ENCODE measurements at regions of chr2 and their contacts with region 1.

Region 1: DNA sequence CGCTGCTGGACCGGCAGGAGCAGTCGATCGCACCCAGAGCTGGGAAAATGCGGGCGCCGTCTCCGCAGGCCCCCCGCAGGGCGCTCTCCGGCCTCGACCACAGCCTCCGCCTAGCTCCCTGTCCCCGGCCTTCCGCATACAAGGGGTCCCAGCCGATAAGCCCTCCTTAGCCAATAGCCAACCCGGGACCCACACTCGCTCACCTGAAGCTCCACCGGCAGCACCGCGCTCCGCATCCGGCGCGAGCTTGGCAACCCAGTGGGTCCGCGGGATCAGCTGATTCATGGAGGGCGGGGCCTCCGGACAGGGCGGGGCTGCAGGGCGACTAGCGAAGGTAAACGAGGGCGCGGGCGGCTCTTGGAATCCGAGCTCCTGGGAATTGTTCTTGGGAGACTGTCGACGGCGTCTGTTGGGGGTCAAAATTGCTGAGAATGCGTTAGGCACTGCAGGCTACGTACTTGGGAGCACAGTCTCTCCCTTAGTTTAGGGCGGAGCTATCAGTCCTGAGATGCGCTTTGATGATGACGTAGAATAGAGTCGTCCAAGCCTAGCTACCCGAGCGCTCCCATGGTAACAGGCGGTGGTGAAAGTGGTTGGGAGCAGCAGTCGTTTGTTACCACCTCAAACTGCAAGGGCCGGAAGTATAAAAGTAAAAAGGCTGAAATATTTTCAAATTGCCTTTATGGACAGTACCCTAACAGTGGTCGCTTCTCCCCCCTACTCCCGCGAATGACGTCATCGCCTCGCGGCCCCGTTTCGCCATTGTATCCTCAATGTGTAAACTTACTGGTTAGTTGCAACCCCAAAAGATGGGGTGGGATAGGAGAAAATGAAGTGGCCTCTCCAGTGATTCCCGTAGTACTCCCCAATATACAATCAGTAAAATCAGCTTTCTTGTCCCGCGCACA is at the start of gene ALS2:
- DNase-seq: peak; percentile 94 to 97 (median 96)
- H3K4me3 ChIP-seq: peak within 1 kb of the TSS; percentile 89 to 95
- H3K4me3 Mint-ChIP-seq: peak within 1 kb of the TSS; percentile 93 to 99 (median 97)
- H3K27ac ChIP-seq: peak within 1 kb of the TSS; percentile 76
- H3K27ac Mint-ChIP-seq: peak within 1 kb of the TSS; percentile 85 to 100 (median 99)
- H3K4me1 ChIP-seq: peaks cover 15% of the 10 kb centered on the region
- H3K4me1 Mint-ChIP-seq: peaks cover 11 to 22% (median 15%) of the 10 kb centered on the region in 4 donors
- H3K27me3 ChIP-seq: no peaks in the 10 kb centered on the region
- H3K27me3 Mint-ChIP-seq: peaks cover 1 to 4% of the 10 kb centered on the region in 2 donors
- total RNA-seq, gene ALS2: 9.8 to 10.5 TPM

Region 2: DNA sequence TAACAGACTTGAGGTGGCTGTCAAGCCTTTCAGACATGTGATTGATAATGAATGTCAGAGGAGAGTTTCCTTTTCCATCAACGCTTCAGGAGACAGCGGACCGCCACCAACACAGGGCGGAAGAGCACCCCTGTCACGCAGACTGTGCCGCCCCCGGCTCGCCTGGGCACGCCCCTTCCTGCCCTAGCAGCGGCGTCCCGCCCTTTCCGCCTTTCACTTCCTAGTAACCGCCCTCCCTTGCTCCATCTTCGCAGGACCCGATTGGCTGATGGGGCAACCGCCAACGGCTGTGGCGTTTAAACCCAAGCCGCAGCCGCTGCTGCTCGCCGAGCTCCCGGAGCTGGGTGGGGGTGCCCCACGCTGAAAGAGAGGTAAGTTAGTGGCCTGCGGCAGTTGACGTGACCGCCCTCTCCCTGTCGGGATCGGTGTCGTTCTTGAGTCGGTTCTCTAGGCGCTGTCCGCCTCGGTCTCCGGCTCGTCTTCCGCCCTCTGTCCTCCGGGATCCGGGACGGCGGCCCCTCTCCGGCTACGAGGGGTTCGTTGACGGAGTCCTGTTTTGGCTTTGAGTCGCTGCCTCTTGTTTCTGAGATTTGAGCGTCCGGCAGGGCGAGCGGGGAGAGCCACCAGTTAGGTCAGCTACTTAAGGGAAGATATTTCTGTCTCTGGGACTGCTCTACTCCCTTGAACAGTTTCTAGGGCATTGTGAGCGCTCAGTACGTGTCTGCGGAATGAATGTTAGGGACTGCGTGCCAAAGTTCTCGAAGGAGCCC is 1254.9 kb before region 1 on chr2 and contains the start of gene SGO2:
- CTCF ChIA-PET with region 1: no interaction called
- POLR2A ChIA-PET with region 1: no interaction called
- intact Hi-C with region 1: loop called (anchors 5 kb)
- DNase-seq: peak; percentile 93 to 97 (median 95)
- H3K4me3 ChIP-seq: peak within 1 kb of the TSS; percentile 82 to 98
- H3K4me3 Mint-ChIP-seq: peak within 1 kb of the TSS; percentile 91 to 97 (median 93)
- H3K27ac ChIP-seq: peak within 1 kb of the TSS; percentile 55
- H3K27ac Mint-ChIP-seq: peak within 1 kb of the TSS; percentile 83 to 93 (median 85)
- H3K4me1 ChIP-seq: peaks cover 14% of the 10 kb centered on the region
- H3K4me1 Mint-ChIP-seq: peaks cover 6 to 15% (median 12%) of the 10 kb centered on the region in 4 donors
- H3K27me3 ChIP-seq: no peaks in the 10 kb centered on the region
- H3K27me3 Mint-ChIP-seq: no peaks in the 10 kb centered on the region
- total RNA-seq, gene SGO2: 4.4 to 4.8 TPM

Region 3: GRCh38 chr2:201451292-201452057 is 329.5 kb before region 1 on chr2 and contains the starts of genes STRADB and TRAK2:
- CTCF ChIA-PET with region 1: interaction called, 3 read pairs
- POLR2A ChIA-PET with region 1: interaction called, 17 read pairs
- intact Hi-C with region 1: loop called (anchors 1 kb)
- DNase-seq: peak; percentile 93 to 98 (median 95)
- H3K4me3 ChIP-seq: peak within 1 kb of the TSS; percentile 38 to 93
- H3K4me3 Mint-ChIP-seq: peak within 1 kb of the TSS; percentile 94 to 99 (median 98)
- H3K27ac ChIP-seq: peak within 1 kb of the TSS; percentile 74
- H3K27ac Mint-ChIP-seq: peak within 1 kb of the TSS; percentile 95 to 98 (median 97)
- H3K4me1 ChIP-seq: peaks cover 49% of the 10 kb centered on the region
- H3K4me1 Mint-ChIP-seq: peaks cover 29 to 52% (median 41%) of the 10 kb centered on the region in 4 donors
- H3K27me3 ChIP-seq: no peaks in the 10 kb centered on the region
- H3K27me3 Mint-ChIP-seq: no peaks in the 10 kb centered on the region
- total RNA-seq, gene STRADB: 17.3 to 20.9 TPM
- total RNA-seq, gene TRAK2: 46.8 to 47.3 TPM

Region 4: GRCh38 chr2:201642579-201643215 is 138.2 kb before region 1 on chr2:
- CTCF ChIA-PET with region 1: no interaction called
- POLR2A ChIA-PET with region 1: interaction called, 16 read pairs
- intact Hi-C with region 1: loop called (anchors 1 kb)
- DNase-seq: peak; percentile 83 to 91 (median 89)
- H3K4me3 ChIP-seq: peak overlapping the region; percentile 92 to 97
- H3K4me3 Mint-ChIP-seq: peak overlapping the region; percentile 89 to 99 (median 96)
- H3K27ac ChIP-seq: peak overlapping the region; percentile 83
- H3K27ac Mint-ChIP-seq: peak overlapping the region; percentile 95 to 100 (median 96)
- H3K4me1 ChIP-seq: no peaks in the 10 kb centered on the region
- H3K4me1 Mint-ChIP-seq: peaks cover 7 to 23% (median 7%) of the 10 kb centered on the region in 4 donors
- H3K27me3 ChIP-seq: no peaks in the 10 kb centered on the region
- H3K27me3 Mint-ChIP-seq: no peaks in the 10 kb centered on the region

Region 5: DNA sequence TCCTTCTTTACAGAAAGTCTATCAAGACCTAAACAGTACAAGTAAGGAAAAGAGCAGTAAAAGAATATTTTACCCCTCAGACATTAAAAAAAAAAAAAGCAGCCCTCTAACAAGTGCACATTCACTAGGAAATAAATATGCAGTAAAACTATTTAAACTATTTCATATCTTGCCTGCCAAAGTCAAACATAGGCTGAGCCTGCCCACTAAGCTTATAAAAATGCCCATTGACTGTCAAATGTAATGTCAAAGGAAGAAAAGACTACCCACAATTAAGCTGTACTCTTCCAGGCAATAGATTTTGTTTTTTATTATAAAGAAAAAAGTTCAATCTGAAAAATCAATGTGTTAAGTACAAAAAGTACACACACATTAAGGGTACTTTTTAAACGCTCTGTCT is 12.0 kb before region 1 on chr2:
- CTCF ChIA-PET with region 1: no interaction called
- POLR2A ChIA-PET with region 1: interaction called, 12 read pairs
- intact Hi-C with region 1: no loop called
- DNase-seq: no peak
- H3K4me3 ChIP-seq: no peak overlapping the region
- H3K4me3 Mint-ChIP-seq: no peak overlapping the region
- H3K27ac ChIP-seq: no peak overlapping the region
- H3K27ac Mint-ChIP-seq: peak overlapping the region in 1 of 7 donors; percentile 47
- H3K4me1 ChIP-seq: no peaks in the 10 kb centered on the region
- H3K4me1 Mint-ChIP-seq: peaks cover 0 to under 1% (median 0%) of the 10 kb centered on the region in 4 donors
- H3K27me3 ChIP-seq: no peaks in the 10 kb centered on the region
- H3K27me3 Mint-ChIP-seq: no peaks in the 10 kb centered on the region

Region 6: GRCh38 chr2:202238234-202239197 is 457.6 kb after region 1 on chr2 and contains the start of gene SUMO1:
- CTCF ChIA-PET with region 1: no interaction called
- POLR2A ChIA-PET with region 1: no interaction called
- intact Hi-C with region 1: loop called (anchors 5 kb)
- DNase-seq: peak; percentile 90 to 96 (median 90)
- H3K4me3 ChIP-seq: peak within 1 kb of the TSS; percentile 52 to 96
- H3K4me3 Mint-ChIP-seq: peak within 1 kb of the TSS; percentile 95 to 100 (median 98)
- H3K27ac ChIP-seq: peak within 1 kb of the TSS; percentile 81
- H3K27ac Mint-ChIP-seq: peak within 1 kb of the TSS; percentile 89 to 100 (median 98)
- H3K4me1 ChIP-seq: peaks cover 17% of the 10 kb centered on the region
- H3K4me1 Mint-ChIP-seq: peaks cover 16 to 48% (median 34%) of the 10 kb centered on the region in 4 donors
- H3K27me3 ChIP-seq: no peaks in the 10 kb centered on the region
- H3K27me3 Mint-ChIP-seq: no peaks in the 10 kb centered on the region
- total RNA-seq, gene SUMO1: 53.2 to 53.5 TPM

Region 7: GRCh38 chr2:202375609-202376408 is 594.9 kb after region 1 on chr2 and contains the start of gene BMPR2:
- CTCF ChIA-PET with region 1: no interaction called
- POLR2A ChIA-PET with region 1: no interaction called
- intact Hi-C with region 1: loop called (anchors 5 kb)
- DNase-seq: peak; percentile 73 to 88 (median 81)
- H3K4me3 ChIP-seq: peak within 1 kb of the TSS; percentile 91 to 98
- H3K4me3 Mint-ChIP-seq: peak within 1 kb of the TSS; percentile 96 to 99 (median 99)
- H3K27ac ChIP-seq: peak within 1 kb of the TSS; percentile 76
- H3K27ac Mint-ChIP-seq: peak within 1 kb of the TSS; percentile 91 to 98 (median 95)
- H3K4me1 ChIP-seq: peaks cover 30% of the 10 kb centered on the region
- H3K4me1 Mint-ChIP-seq: peaks cover 21 to 43% (median 23%) of the 10 kb centered on the region in 4 donors
- H3K27me3 ChIP-seq: no peaks in the 10 kb centered on the region
- H3K27me3 Mint-ChIP-seq: no peaks in the 10 kb centered on the region
- total RNA-seq, gene BMPR2: 18.8 to 20.8 TPM